Right ventricle myocardium inferior (tissue), 1 donor: ENCODE measurements at regions of chr13 and their contacts with region 1.

Region 1: GRCh38 chr13:95494082-95494681 is 58.3 kb upstream of the CLDN10 start:
- DNase-seq: no peak
- ATAC-seq: no peak

Region 2: GRCh38 chr13:95426636-95427035 is 67.5 kb before region 1 on chr13:
- intact Hi-C with region 1: no loop called
- DNase-seq: no peak
- ATAC-seq: no peak

Region 3: GRCh38 chr13:95573226-95573625 is 79.0 kb after region 1 on chr13:
- intact Hi-C with region 1: no loop called
- DNase-seq: no peak
- ATAC-seq: no peak

Region 4: GRCh38 chr13:95624020-95624419 is 129.8 kb after region 1 on chr13:
- intact Hi-C with region 1: loop called (anchors 5 kb)
- DNase-seq: no peak
- ATAC-seq: peak; percentile 60

Region 5: GRCh38 chr13:95660981-95661581 is 166.9 kb after region 1 on chr13:
- intact Hi-C with region 1: loop called (anchors 5 kb)
- DNase-seq: no peak
- ATAC-seq: no peak

Region 6: GRCh38 chr13:95676762-95677563 is 182.8 kb after region 1 on chr13 and contains the start of gene DNAJC3:
- intact Hi-C with region 1: loop called (anchors 5 kb)
- DNase-seq: peak; percentile 100
- ATAC-seq: peak; percentile 99
- total RNA-seq, gene DNAJC3: 30.0 TPM

Region 7: GRCh38 chr13:95834134-95834765 is 340.1 kb after region 1 on chr13:
- intact Hi-C with region 1: loop called (anchors 1 kb)
- DNase-seq: peak; percentile 66
- ATAC-seq: peak; percentile 65